Sciatic nerve (tissue), 2 donors: ENCODE measurements at regions of chr11 and their contacts with region 1.

Region 1: DNA sequence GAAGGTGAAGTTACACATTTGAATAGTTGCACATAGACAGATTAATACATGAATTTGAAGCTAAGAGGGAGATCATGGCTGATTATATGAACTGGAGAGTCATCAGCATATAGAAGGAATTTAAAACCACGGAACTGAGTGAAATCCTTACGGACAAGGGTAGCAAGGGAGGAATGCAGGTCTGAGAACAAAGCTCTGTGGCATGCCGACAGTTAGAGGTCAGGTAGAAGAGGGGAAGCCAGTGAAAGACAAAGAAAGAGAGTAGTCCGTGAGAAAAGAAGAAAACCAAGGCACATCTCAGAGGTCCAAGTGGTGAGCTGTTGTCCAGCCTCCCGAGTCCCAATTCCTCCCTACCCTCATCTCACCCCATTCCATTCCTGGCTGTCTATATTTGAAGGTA is 11.8 kb upstream of the SYT9 start:
- DNase-seq: no peak
- ATAC-seq: no peak

Region 2: GRCh38 chr11:7292922-7293321 is 53.0 kb after region 1 on chr11:
- intact Hi-C with region 1: loop called (anchors 2 kb)
- DNase-seq: no peak
- ATAC-seq: no peak